SK-N-SH (cell line): ENCODE measurements at regions of chr6 and their contacts with region 1.

Region 1: DNA sequence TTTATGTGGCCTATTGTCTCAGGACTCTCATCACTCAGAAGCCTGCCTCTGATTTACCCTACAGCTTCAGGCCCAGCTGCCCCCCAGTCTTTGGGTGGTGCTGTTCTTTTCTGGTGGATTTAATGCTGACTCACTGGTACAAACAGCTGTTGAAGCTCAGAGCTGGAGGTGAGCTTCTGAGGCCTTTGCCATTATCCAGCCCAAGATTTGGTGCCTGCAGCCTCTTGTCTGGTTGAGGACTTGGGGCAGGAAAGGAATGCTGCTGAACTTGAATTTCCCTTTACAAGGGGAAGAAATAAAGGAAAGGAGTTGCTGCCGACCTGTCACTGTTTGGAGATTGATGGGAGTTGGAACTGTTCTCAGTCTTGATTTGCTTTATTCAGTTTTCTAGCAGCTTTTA is 19.8 kb downstream of the ABCF1 start:
- DNase-seq: no peak
- H3K4me3 ChIP-seq: no peak overlapping the region
- H3K27ac ChIP-seq: peak overlapping the region in 1 of 2 experiments; percentile 7; a peak in 1 of 4 replicates
- H3K4me1 ChIP-seq: no peaks in the 10 kb centered on the region
- H3K27me3 ChIP-seq: no peaks in the 10 kb centered on the region
- CTCF ChIP-seq: no peak
- EP300 ChIP-seq: no peak
- RAD21 ChIP-seq: no peak

Region 2: GRCh38 chr6:30578051-30578450 is 12.9 kb before region 1 on chr6:
- CTCF ChIA-PET with region 1: interaction called, 29 read pairs
- POLR2A ChIA-PET with region 1: interaction called, 4 read pairs
- DNase-seq: no peak
- H3K4me3 ChIP-seq: no peak overlapping the region
- H3K27ac ChIP-seq: no peak overlapping the region
- H3K4me1 ChIP-seq: peaks cover 4 to 6% of the 10 kb centered on the region in 2 experiments; a peak in 3 of 4 replicates
- H3K27me3 ChIP-seq: no peaks in the 10 kb centered on the region
- CTCF ChIP-seq: no peak
- EP300 ChIP-seq: no peak
- RAD21 ChIP-seq: no peak

Region 3: GRCh38 chr6:30616811-30617564 is 26.0 kb after region 1 on chr6 and contains the start of gene PPP1R10:
- CTCF ChIA-PET with region 1: interaction called, 33 read pairs
- POLR2A ChIA-PET with region 1: interaction called, 32 read pairs
- DNase-seq: peak; percentile 82
- H3K4me3 ChIP-seq: peak within 1 kb of the TSS; percentile 78 to 94
- H3K27ac ChIP-seq: peak within 1 kb of the TSS; percentile 96 to 98
- H3K4me1 ChIP-seq: peaks cover 21 to 32% of the 10 kb centered on the region in 2 experiments
- H3K27me3 ChIP-seq: no peaks in the 10 kb centered on the region
- CTCF ChIP-seq: no peak
- EP300 ChIP-seq: no peak
- RAD21 ChIP-seq: no peak
- polyA plus RNA-seq, gene PPP1R10: 16.8 and 22.1 TPM in 2 replicates